ENCODE measurements at regions of chr13 and their contacts with region 1.

Region 1: DNA sequence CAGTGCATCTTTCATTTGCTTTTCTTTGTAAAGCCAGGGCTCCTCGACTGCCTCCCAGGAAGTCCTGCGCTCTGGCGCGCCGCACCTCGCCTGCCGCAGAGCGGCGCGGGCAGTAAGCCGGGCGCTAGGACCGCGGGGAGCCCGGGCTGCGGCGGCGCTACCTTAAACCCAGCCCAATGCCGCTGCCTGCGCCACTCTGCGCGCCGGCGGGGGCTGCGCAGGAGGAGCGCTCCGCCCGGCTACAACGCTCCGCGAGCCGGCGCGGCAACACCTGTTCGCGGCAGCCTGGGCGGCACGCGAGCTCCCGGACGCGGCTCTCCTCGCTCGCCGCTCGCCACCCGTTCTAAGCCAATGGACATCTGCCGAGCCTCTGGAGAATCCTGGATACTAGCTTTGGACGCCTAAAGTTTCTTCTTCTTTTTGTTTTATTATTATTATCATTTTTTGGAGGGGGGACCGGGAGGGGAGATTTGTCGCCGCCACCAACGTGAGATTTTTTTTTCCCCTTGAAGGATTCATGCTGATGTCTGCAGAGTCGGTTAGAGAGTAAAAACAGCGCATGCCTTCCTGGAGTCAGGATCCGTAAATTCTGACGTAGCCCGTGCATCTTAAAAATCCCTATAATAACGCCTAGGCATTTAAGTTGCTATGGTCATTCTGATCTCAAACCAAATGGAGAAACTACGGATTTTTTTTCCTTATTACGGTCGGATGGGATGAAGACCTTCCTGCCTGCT is at the start of gene FGF9:
- DNase-seq: peak; percentile 76
- H3K4me3 Mint-ChIP-seq: peak within 1 kb of the TSS; percentile 79
- H3K27ac Mint-ChIP-seq: no peak within 1 kb of the TSS
- H3K4me1 Mint-ChIP-seq: peaks cover 43% of the 10 kb centered on the region
- H3K27me3 Mint-ChIP-seq: peaks cover 69% of the 10 kb centered on the region
- total RNA-seq, gene FGF9: 0.39 and 0.60 TPM in 2 replicates

Region 2: DNA sequence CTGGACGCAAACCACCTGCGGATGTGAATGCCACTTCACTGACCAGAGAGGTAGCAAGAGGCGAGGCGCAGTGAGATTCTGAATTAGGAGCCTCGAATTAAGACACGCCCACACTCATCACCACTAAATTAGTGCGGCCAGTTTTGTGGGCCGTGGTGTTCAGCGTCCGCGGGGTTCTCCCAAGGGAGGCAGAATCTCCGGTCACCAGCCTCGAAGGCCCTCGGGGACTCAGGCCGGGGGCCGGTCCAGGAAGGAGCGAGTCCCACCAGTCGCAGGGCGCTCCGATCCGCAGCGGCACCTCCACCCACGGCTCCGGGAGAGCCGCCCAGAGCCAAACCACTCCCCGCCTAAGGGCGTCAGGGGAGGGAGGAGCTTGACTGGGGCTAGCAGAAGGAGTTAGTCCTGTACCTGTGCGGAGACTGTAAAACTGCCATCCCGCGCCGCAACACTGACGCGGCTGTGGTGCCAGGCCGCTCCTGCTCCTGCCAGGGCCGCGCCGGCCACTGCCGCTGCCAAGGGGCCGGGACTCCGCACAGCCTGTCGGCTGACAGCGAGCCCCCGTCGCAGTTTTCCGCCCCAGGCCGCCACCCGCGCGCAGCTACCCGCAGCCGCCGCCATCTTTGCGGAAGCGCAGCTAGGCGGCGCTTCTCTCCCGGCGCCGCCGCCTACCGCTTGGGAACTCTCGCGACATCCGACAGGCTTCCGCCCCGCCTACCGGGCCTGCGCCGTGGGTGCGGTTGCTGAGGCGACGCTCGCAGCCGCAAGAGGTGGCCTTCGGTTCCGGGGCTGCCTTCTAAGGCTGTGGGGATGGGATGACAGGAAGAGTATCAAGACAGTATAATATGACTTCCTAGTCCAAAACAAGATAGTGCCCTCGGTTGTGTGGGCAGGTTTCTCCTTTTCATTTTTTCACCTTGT is 67.3 kb before region 1 on chr13 and contains the start of gene MICU2:
- intact Hi-C with region 1: loop called (anchors 2 kb)
- DNase-seq: peak; percentile 94
- H3K4me3 Mint-ChIP-seq: peak within 1 kb of the TSS; percentile 81
- H3K27ac Mint-ChIP-seq: peak within 1 kb of the TSS; percentile 85
- H3K4me1 Mint-ChIP-seq: peaks cover 22% of the 10 kb centered on the region
- H3K27me3 Mint-ChIP-seq: peaks cover 11% of the 10 kb centered on the region
- total RNA-seq, gene MICU2: 36.6 and 38.8 TPM in 2 replicates

Region 3: DNA sequence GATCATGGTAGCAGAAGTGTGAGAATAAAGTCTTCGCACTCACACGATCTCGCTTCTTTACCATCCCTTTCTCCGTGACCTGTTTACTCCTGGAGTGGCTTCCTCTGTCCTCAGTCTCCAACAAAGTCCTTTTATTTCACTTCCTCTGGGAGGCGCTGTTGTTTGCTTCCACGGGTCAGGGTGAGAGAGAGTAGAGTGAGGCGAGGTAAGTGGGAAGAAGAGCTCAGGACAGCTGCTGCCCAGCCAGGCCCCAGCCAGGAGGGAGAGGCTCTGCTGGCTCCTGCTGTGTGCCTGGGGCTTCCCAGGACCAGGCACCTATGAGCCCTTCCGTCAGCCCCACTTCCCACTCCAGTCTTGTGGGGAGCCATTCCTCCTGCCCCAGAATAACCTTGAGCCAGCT is 242.0 kb after region 1 on chr13:
- intact Hi-C with region 1: no loop called
- DNase-seq: no peak
- H3K4me3 Mint-ChIP-seq: no peak overlapping the region
- H3K27ac Mint-ChIP-seq: no peak overlapping the region
- H3K4me1 Mint-ChIP-seq: no peaks in the 10 kb centered on the region
- H3K27me3 Mint-ChIP-seq: no peaks in the 10 kb centered on the region

Region 4: GRCh38 chr13:21938168-21938567 is 267.1 kb after region 1 on chr13:
- intact Hi-C with region 1: no loop called
- DNase-seq: no peak
- H3K4me3 Mint-ChIP-seq: no peak overlapping the region
- H3K27ac Mint-ChIP-seq: no peak overlapping the region
- H3K4me1 Mint-ChIP-seq: no peaks in the 10 kb centered on the region
- H3K27me3 Mint-ChIP-seq: no peaks in the 10 kb centered on the region

Region 5: DNA sequence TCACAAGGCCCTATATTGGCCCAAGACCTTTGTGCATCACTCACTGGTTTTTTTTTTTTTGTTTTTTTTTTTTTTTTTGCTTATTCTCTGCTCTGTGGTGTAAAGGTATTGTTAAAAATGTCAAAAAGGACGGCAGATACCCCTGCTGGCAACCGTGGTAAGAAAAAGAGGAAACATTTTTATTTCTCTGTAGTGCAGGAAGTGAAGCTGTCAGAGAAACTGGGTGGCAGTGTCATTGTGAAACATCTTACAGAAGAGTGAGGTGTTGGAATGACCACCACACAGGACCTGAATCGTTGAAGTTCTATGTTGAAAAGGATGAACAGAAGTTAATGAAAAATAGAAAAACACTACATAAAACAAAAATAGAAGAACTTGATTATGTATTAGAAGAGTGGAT is 346.2 kb after region 1 on chr13:
- intact Hi-C with region 1: loop called (anchors 10 kb)
- DNase-seq: no peak
- H3K4me3 Mint-ChIP-seq: no peak overlapping the region
- H3K27ac Mint-ChIP-seq: no peak overlapping the region
- H3K4me1 Mint-ChIP-seq: peaks cover 4% of the 10 kb centered on the region
- H3K27me3 Mint-ChIP-seq: no peaks in the 10 kb centered on the region

Region 6: GRCh38 chr13:22114630-22115311 is 443.7 kb after region 1 on chr13:
- intact Hi-C with region 1: loop called (anchors 10 kb)
- DNase-seq: peak; percentile 31
- H3K4me3 Mint-ChIP-seq: no peak overlapping the region
- H3K27ac Mint-ChIP-seq: peak overlapping the region; percentile 91
- H3K4me1 Mint-ChIP-seq: peaks cover 51% of the 10 kb centered on the region
- H3K27me3 Mint-ChIP-seq: no peaks in the 10 kb centered on the region

Region 7: DNA sequence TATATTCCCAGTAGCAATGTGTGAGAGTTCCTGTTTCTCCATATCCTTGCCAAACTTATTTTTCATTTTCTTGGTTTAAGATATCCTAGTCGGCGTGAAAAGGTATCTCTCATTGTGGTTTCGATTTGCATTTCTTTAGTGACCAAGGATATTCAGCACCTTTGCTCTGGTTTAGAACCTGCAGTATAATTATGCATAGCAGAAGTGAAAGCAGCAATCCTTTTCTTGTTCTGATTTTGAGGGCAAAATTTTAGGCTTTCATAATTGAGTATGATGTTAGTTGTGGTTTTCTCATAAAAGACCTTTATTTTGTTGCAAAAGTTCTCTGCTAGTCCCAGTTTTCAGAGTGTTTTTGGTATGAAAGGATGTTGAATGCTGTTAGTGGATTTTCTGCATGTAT is 490.8 kb after region 1 on chr13:
- intact Hi-C with region 1: loop called (anchors 10 kb)
- DNase-seq: no peak
- H3K4me3 Mint-ChIP-seq: no peak overlapping the region
- H3K27ac Mint-ChIP-seq: no peak overlapping the region
- H3K4me1 Mint-ChIP-seq: peaks cover 20% of the 10 kb centered on the region
- H3K27me3 Mint-ChIP-seq: peaks cover 5% of the 10 kb centered on the region